ENCODE measurements at regions of chr19 and their contacts with region 1.

Region 1: DNA sequence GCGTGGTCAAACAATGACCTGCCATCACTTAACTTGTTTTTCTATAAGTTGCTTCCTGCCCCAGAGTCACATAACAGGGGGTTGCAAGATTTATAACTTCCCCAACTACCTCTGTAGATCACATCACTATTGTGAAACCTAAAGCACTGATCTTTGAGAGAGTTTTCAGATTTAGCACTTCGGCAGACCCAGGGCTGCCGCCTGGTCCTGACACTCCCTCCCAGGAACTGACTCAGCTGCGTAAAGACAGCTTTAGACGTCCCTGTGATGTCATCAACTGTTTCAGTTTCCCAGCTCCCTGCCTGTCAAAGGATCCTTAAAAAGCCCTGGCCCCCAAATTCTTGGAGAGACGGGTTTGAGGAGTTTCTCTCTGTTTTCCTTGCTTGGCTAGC is 33.3 kb downstream of the IGFL2 start:
- DNase-seq: no peak
- H3K4me3 ChIP-seq: no peak overlapping the region
- H3K27ac ChIP-seq: no peak overlapping the region
- H3K4me1 ChIP-seq: peaks cover 5% of the 10 kb centered on the region
- CTCF ChIP-seq: no peak

Region 2: DNA sequence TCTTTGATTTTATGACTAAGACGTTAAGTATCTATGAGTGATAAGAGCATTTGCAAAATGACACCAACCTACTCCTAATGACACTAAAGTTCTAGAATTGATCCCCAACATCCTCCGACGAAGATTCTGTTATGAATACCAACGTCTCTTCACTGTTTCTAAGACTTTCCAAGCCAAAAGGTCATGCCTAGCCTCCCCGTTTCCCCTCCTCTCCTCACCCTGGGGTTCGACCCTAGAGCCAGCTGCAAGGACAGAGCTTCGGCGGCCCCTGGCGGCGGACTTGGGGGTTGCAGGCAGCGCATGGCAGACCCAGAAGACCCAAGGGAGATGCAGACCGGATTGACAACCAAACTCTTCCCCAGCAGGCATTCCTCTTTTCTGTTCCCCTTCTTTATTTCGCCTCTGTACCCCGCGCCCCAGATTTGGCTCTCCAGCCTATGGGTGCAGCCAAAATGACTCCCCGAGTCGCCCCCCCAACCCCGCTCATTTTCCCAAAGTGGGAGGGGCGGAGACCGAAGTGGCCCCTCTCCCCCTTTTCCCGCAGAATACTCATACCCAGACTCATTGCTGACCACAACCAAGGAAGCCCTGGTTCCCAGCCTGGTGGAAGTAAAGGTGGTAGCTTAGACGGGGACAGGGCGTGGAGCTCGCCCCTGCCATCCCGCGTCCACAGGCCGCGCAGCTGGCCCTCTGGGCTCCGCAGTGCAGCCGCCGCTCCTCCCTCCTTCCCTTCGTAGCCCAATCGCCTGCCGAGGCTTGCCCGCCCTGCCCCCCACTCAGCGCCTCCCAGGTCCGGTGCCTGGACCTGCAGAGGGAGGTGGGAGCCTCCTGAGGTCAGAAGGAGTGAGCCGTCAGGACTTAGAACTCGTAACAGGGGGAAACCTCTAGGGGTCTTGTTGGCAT is 538.1 kb before region 1 on chr19:
- CTCF ChIA-PET with region 1: no interaction called
- POLR2A ChIA-PET with region 1: no interaction called
- intact Hi-C with region 1: no loop called
- DNase-seq: peak; percentile 90
- H3K4me3 ChIP-seq: peak overlapping the region; percentile 3
- H3K27ac ChIP-seq: peak overlapping the region; percentile 86
- H3K4me1 ChIP-seq: peaks cover 54% of the 10 kb centered on the region
- CTCF ChIP-seq: peak; percentile 99

Region 3: GRCh38 chr19:46021531-46022041 is 159.8 kb before region 1 on chr19:
- CTCF ChIA-PET with region 1: no interaction called
- POLR2A ChIA-PET with region 1: no interaction called
- intact Hi-C with region 1: loop called (anchors 10 kb)
- DNase-seq: no peak
- H3K4me3 ChIP-seq: no peak overlapping the region
- H3K27ac ChIP-seq: no peak overlapping the region
- H3K4me1 ChIP-seq: no peaks in the 10 kb centered on the region
- CTCF ChIP-seq: no peak

Measured in OCI-LY7 (cell line).